Mammary epithelial cell (primary cell): ENCODE measurements at regions of chr10 and their contacts with region 1.

Region 1: DNA sequence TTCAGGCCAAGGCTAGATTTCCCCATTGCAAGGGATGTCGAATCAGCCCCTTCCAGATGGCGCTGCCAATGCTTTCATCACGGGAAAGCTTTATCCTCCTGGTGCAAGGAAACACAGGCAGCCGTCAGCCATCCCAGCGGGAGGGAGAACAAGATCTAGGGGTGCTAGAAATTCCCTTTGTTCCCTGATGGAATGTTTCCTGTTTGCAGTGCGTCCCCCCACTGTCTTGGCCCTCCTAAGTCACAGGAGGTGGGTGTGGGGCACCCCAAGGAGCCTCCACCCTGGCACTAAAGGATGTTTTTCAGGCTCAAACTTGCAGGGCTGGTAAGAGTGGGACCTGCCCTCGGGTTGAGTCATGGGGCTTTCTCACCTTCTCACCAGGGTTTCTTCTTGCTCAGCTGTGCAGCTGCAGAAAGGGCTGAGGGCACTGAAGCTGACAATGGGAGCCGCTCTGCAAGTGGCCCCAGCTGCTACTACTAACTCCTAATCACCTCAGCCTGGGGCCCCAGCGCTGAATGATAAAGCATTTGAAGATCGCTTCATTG is 103.6 kb downstream of the PRPF18 start:
- DNase-seq: peak; percentile 95
- H3K4me3 ChIP-seq: peak overlapping the region in 1 of 3 experiments; percentile 8
- H3K27ac ChIP-seq: peak overlapping the region; percentile 38
- H3K4me1 ChIP-seq: peaks cover 32% of the 10 kb centered on the region
- H3K27me3 ChIP-seq: no peaks in the 10 kb centered on the region
- CTCF ChIP-seq: peak in 1 of 2 donors; percentile 1

Region 2: DNA sequence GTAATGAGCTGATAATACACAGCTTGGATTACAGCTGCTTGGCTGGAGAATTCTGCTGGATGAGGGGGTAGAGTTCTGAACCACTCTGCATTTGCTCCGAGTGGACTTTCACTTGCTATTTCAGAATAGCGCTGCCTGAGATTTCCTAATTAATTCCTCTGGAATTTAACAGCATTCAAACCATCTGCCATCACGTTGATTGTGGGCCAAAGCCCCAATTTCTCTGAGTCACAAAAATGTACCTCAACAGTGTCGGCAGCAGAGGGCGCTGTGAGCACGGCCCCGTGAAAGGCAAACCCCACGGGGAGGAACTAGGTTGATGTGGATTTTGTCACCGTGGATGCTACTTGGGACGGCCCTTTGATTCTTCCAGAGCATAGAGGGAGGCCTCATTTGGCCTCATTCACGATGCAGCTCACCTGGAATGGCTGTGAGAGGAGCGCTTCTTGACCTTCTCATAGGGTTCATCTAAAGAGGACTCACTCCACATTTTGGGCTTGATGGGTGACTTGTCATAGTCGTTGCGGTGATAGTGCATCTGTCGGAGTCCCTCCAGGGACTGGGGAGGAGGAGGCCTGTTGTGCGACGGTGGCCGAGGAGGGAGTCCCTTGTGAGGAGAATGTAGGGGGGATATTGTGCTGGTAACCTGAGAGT is 30.3 kb before region 1 on chr10:
- CTCF ChIA-PET with region 1: no interaction called
- dilution Hi-C with region 1: no loop called
- in situ Hi-C with region 1: no loop called
- intact Hi-C with region 1: loop called (anchors 2 kb)
- DNase-seq: peak; percentile 65
- H3K4me3 ChIP-seq: no peak overlapping the region
- H3K27ac ChIP-seq: peak overlapping the region; percentile 73
- H3K4me1 ChIP-seq: peaks cover 22% of the 10 kb centered on the region
- H3K27me3 ChIP-seq: no peaks in the 10 kb centered on the region
- CTCF ChIP-seq: peak; percentile 87 to 93

Region 3: GRCh38 chr10:13853854-13854253 is 163.5 kb after region 1 on chr10:
- CTCF ChIA-PET with region 1: no interaction called
- dilution Hi-C with region 1: no loop called
- in situ Hi-C with region 1: no loop called
- intact Hi-C with region 1: no loop called
- DNase-seq: no peak
- H3K4me3 ChIP-seq: no peak overlapping the region
- H3K27ac ChIP-seq: no peak overlapping the region
- H3K4me1 ChIP-seq: no peaks in the 10 kb centered on the region
- H3K27me3 ChIP-seq: no peaks in the 10 kb centered on the region
- CTCF ChIP-seq: no peak